ENCODE measurements at regions of chr10 and their contacts with region 1.

Region 1: GRCh38 chr10:11663763-11664555 is 52.5 kb upstream of the USP6NL start:
- DNase-seq: peak; percentile 39
- ATAC-seq: peak; percentile 64
- H3K4me3 Mint-ChIP-seq: peak overlapping the region; percentile 73
- H3K27ac Mint-ChIP-seq: peak overlapping the region; percentile 96
- H3K4me1 Mint-ChIP-seq: peaks cover 87% of the 10 kb centered on the region
- H3K27me3 Mint-ChIP-seq: no peaks in the 10 kb centered on the region
- CTCF ChIP-seq: no peak

Region 2: GRCh38 chr10:11647676-11648075 is 16.3 kb before region 1 on chr10:
- CTCF ChIA-PET with region 1: no interaction called
- POLR2A ChIA-PET with region 1: interaction called, 6 read pairs
- intact Hi-C with region 1: loop called (anchors 2 kb)
- DNase-seq: no peak
- ATAC-seq: no peak
- H3K4me3 Mint-ChIP-seq: no peak overlapping the region
- H3K27ac Mint-ChIP-seq: no peak overlapping the region
- H3K4me1 Mint-ChIP-seq: peaks cover under 1% of the 10 kb centered on the region
- H3K27me3 Mint-ChIP-seq: no peaks in the 10 kb centered on the region
- CTCF ChIP-seq: no peak

Region 3: GRCh38 chr10:11684717-11685645 is 21.0 kb after region 1 on chr10:
- CTCF ChIA-PET with region 1: interaction called, 4 read pairs
- POLR2A ChIA-PET with region 1: interaction called, 17 read pairs
- intact Hi-C with region 1: loop called (anchors 1 kb)
- DNase-seq: peak; percentile 69
- ATAC-seq: peak; percentile 76
- H3K4me3 Mint-ChIP-seq: peak overlapping the region; percentile 90
- H3K27ac Mint-ChIP-seq: peak overlapping the region; percentile 100
- H3K4me1 Mint-ChIP-seq: peaks cover 91% of the 10 kb centered on the region
- H3K27me3 Mint-ChIP-seq: no peaks in the 10 kb centered on the region
- CTCF ChIP-seq: no peak

Region 4: DNA sequence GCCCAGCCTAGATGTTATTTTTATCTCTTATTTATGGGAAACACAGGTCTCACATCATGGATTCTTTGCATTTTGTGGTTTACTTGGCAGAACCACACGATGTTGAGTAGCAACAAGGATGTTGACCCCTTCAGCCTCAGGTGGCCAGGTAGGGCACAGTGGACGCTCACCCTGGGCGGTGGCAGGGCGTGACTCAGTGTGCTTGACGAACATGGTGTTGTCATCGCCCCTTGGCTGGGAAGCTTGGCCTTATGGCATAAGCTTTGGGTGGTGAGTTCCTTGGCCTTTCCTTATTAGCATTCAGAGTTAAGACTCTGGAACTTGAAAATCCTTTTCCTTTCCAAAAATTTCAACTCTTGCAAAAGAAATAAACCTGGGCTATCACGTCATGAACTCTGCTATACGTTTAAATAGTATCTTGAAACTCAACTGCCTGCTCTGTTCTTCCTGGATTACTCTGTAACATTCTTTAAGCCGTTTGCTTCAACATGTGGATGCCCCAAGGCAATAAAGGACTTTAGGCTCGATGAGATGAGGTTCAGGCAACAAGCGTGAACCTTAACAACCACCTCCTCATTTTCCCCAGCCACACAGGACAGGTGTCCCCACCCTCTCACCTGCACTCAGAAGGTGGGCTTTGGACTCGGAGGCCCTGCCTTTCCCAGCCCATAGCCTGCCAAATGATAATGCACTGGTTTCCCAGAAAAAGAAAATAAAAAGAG is 55.7 kb after region 1 on chr10:
- CTCF ChIA-PET with region 1: interaction called, 3 read pairs
- POLR2A ChIA-PET with region 1: no interaction called
- intact Hi-C with region 1: loop called (anchors 2 kb)
- DNase-seq: no peak
- ATAC-seq: no peak
- H3K4me3 Mint-ChIP-seq: peak overlapping the region; percentile 19
- H3K27ac Mint-ChIP-seq: peak overlapping the region; percentile 43
- H3K4me1 Mint-ChIP-seq: peaks cover 55% of the 10 kb centered on the region
- H3K27me3 Mint-ChIP-seq: no peaks in the 10 kb centered on the region
- CTCF ChIP-seq: no peak